B cell (primary cell): ENCODE measurements at regions of chr2 and their contacts with region 1.

Region 1: DNA sequence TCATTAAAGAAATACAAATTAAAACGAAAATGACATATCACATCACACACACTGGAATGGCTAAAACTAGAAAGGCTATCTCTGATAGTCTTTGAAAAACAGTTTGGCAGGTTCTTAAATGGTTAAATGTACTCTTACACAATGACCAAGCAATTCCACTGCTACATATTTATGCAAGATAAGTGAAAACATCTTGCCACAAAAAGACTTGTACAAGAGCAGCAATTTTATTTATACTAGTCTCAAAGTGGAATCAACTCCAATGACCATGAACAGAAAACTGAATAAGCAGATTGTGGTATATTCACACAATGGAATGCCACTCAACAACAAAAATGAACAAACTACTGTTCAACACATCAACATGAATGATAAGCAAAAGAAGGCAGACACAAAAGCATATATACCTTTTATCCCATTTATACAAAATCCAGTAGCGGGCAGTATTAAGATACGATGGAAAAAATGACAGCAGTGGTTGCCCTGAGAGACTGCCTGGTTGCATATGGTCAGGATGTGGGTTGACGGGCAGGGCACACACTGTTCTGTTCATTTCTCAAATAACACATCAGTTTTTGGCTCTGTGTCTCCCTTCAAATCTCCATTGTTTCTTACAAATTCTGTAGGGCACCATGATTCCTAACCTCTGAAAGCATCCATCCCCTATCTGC is 25.4 kb downstream of the SP100 start:
- DNase-seq: peak; percentile 58
- ATAC-seq: peak; percentile 84
- H3K4me3 ChIP-seq: peak overlapping the region in 3 of 5 experiments; percentile 0 to 45 (median 9)
- H3K4me3 Mint-ChIP-seq: peak overlapping the region; percentile 56
- H3K27ac ChIP-seq: peak overlapping the region; percentile 73 to 80
- H3K27ac Mint-ChIP-seq: peak overlapping the region; percentile 94
- H3K4me1 ChIP-seq: peaks cover 52 to 67% of the 10 kb centered on the region in 2 donors
- H3K4me1 Mint-ChIP-seq: peaks cover 71% of the 10 kb centered on the region
- H3K27me3 ChIP-seq: no peaks in the 10 kb centered on the region
- H3K27me3 Mint-ChIP-seq: no peaks in the 10 kb centered on the region
- CTCF ChIP-seq: no peak

Region 2: GRCh38 chr2:230411570-230412370 is 29.6 kb before region 1 on chr2:
- CTCF ChIA-PET with region 1: interaction called, 4 read pairs
- POLR2A ChIA-PET with region 1: no interaction called
- intact Hi-C with region 1: loop called (anchors 1 kb)
- DNase-seq: peak; percentile 81
- ATAC-seq: peak; percentile 62
- H3K4me3 ChIP-seq: peak overlapping the region; percentile 69 to 92 (median 88)
- H3K4me3 Mint-ChIP-seq: peak overlapping the region; percentile 98
- H3K27ac ChIP-seq: peak overlapping the region; percentile 88 to 92
- H3K27ac Mint-ChIP-seq: peak overlapping the region; percentile 99
- H3K4me1 ChIP-seq: peaks cover 54 to 63% of the 10 kb centered on the region in 2 donors
- H3K4me1 Mint-ChIP-seq: peaks cover 72% of the 10 kb centered on the region
- H3K27me3 ChIP-seq: no peaks in the 10 kb centered on the region
- H3K27me3 Mint-ChIP-seq: no peaks in the 10 kb centered on the region
- CTCF ChIP-seq: no peak

Region 3: DNA sequence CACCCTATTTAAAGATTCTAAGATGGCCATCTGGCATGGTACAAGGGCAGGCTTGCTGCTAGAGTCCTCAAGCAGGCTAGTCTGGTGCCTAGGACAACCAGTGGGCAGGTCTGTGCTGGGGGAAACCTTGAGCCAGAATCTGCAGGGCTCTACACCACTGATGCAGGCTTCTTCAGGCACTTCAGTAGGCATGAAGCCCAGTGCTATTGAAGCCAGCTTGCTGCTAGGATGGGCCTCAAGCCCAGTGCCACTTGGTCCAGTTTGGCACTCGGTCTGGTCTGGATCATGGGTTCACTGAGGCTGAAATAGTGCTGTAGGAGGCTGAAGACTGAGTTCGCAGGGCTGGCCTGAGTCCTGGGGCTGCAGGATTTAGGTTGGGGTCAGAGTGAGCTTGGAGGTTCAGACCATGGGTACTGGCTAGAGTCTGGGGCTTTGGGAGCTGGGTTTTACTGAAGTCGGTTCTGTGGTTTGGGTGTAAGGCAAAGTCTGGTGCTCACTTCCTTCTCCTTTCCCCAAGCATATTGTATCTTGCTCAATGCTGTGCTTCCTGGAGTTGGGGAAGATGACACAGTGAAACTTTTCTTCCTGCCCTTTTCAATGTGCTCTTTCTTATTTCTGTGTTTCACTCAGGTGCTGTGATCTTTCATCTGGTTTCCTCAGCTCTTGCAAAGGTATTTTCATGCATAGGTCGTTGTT is 15.9 kb after region 1 on chr2:
- CTCF ChIA-PET with region 1: no interaction called
- POLR2A ChIA-PET with region 1: no interaction called
- intact Hi-C with region 1: loop called (anchors 2 kb)
- DNase-seq: peak; percentile 60
- ATAC-seq: peak; percentile 74
- H3K4me3 ChIP-seq: peak overlapping the region in 1 of 5 experiments; percentile 14
- H3K4me3 Mint-ChIP-seq: peak overlapping the region; percentile 67
- H3K27ac ChIP-seq: peak overlapping the region; percentile 29 to 80
- H3K27ac Mint-ChIP-seq: peak overlapping the region; percentile 89
- H3K4me1 ChIP-seq: peaks cover 33 to 61% of the 10 kb centered on the region in 2 donors
- H3K4me1 Mint-ChIP-seq: peaks cover 73% of the 10 kb centered on the region
- H3K27me3 ChIP-seq: no peaks in the 10 kb centered on the region
- H3K27me3 Mint-ChIP-seq: no peaks in the 10 kb centered on the region
- CTCF ChIP-seq: no peak

Region 4: DNA sequence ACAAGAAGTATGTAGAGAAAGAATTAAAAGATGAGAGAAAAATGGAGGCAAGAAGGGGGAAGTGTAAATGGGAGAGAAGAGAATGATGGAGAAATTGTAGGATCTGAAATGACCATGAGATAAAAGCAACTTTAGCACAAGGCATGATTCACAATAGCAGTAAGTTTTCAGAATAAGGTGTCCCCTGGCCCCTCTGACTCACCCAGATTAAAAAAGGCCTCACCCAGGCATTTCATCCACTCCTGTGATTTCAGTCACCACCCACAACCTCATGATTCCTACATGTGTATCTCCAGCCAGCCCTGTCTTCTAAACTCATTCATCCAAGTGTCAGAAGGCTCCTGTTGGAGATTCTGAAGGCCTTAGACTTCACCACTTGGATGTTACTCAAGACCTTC is 31.3 kb after region 1 on chr2:
- CTCF ChIA-PET with region 1: no interaction called
- POLR2A ChIA-PET with region 1: no interaction called
- intact Hi-C with region 1: loop called (anchors 5 kb)
- DNase-seq: no peak
- ATAC-seq: peak; percentile 50
- H3K4me3 ChIP-seq: no peak overlapping the region
- H3K4me3 Mint-ChIP-seq: peak overlapping the region; percentile 24
- H3K27ac ChIP-seq: peak overlapping the region; percentile 46 to 81
- H3K27ac Mint-ChIP-seq: peak overlapping the region; percentile 86
- H3K4me1 ChIP-seq: peaks cover 46 to 50% of the 10 kb centered on the region in 2 donors
- H3K4me1 Mint-ChIP-seq: peaks cover 50% of the 10 kb centered on the region
- H3K27me3 ChIP-seq: no peaks in the 10 kb centered on the region
- H3K27me3 Mint-ChIP-seq: no peaks in the 10 kb centered on the region
- CTCF ChIP-seq: no peak

Region 5: GRCh38 chr2:230582851-230583283 is 141.5 kb after region 1 on chr2:
- CTCF ChIA-PET with region 1: no interaction called
- POLR2A ChIA-PET with region 1: no interaction called
- intact Hi-C with region 1: no loop called
- DNase-seq: peak; percentile 71
- ATAC-seq: peak; percentile 80
- H3K4me3 ChIP-seq: peak overlapping the region in 2 of 5 experiments; percentile 2 to 43
- H3K4me3 Mint-ChIP-seq: peak overlapping the region; percentile 67
- H3K27ac ChIP-seq: peak overlapping the region; percentile 62 to 77
- H3K27ac Mint-ChIP-seq: peak overlapping the region; percentile 86
- H3K4me1 ChIP-seq: peaks cover 32 to 42% of the 10 kb centered on the region in 2 donors
- H3K4me1 Mint-ChIP-seq: peaks cover 46% of the 10 kb centered on the region
- H3K27me3 ChIP-seq: no peaks in the 10 kb centered on the region
- H3K27me3 Mint-ChIP-seq: no peaks in the 10 kb centered on the region
- CTCF ChIP-seq: no peak